Activated T-helper 1 cell treated with anti-CD3 and anti-CD28 coated beads, Interleukin-12 subunit alpha, Interleukin-12 subunit beta, Interleukin-2, Interleukin-4 antibody, amounts not matched to agents 30 ng/mL and 10 ng/mL and 1 ng/mL, durations not matched to agents 14 hours and 24 hours and 36 hours (primary cell): ENCODE measurements at regions of chr2 and their contacts with region 1.

Region 1: GRCh38 chr2:60976875-60977561 is 40.5 kb upstream of the PEX13 start:
- DNase-seq: no peak
- H3K4me3 Mint-ChIP-seq: no peak overlapping the region
- H3K27ac Mint-ChIP-seq: peak overlapping the region; percentile 38
- H3K4me1 Mint-ChIP-seq: peaks cover 29% of the 10 kb centered on the region
- H3K27me3 Mint-ChIP-seq: no peaks in the 10 kb centered on the region

Region 2: GRCh38 chr2:60873381-60873780 is 103.6 kb before region 1 on chr2:
- intact Hi-C with region 1: loop called (anchors 2 kb)
- DNase-seq: no peak
- H3K4me3 Mint-ChIP-seq: no peak overlapping the region
- H3K27ac Mint-ChIP-seq: no peak overlapping the region
- H3K4me1 Mint-ChIP-seq: peaks cover 39% of the 10 kb centered on the region
- H3K27me3 Mint-ChIP-seq: no peaks in the 10 kb centered on the region

Region 3: DNA sequence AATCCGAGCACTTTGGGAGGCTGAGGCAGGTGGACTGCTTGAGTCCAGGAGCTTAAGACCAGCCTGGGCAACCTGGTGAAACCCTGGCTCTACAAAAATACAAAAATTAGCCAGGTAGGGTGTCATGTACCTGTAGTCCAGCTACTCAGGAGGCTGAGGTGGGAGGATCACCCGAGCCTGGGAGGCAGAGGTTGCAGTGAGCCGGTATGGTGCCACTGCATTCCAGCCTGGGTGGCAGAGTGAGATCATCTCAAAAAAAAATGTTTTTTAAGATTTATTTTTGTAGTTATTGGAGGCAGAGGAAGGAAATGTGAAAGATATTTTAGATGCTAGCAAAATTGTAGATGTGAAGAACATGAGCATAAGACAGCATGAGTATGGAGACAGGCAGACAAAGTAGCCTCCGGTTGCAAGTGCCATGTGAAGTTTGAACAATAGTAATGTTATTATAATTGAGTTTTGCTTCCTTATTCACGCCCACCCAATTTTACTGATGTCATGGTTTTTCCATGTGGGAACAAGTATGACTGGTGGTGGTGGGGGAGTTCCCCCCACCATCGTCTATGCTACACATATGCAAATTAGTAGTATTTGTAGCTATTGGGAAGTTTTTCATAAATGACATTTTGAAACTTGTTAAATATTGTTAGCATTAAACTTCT is 77.7 kb before region 1 on chr2:
- intact Hi-C with region 1: loop called (anchors 1 kb)
- DNase-seq: no peak
- H3K4me3 Mint-ChIP-seq: peak overlapping the region; percentile 54
- H3K27ac Mint-ChIP-seq: peak overlapping the region; percentile 95
- H3K4me1 Mint-ChIP-seq: peaks cover 35% of the 10 kb centered on the region
- H3K27me3 Mint-ChIP-seq: peaks cover 2% of the 10 kb centered on the region